ENCODE measurements at regions of chr3 and their contacts with region 1.

Region 1: DNA sequence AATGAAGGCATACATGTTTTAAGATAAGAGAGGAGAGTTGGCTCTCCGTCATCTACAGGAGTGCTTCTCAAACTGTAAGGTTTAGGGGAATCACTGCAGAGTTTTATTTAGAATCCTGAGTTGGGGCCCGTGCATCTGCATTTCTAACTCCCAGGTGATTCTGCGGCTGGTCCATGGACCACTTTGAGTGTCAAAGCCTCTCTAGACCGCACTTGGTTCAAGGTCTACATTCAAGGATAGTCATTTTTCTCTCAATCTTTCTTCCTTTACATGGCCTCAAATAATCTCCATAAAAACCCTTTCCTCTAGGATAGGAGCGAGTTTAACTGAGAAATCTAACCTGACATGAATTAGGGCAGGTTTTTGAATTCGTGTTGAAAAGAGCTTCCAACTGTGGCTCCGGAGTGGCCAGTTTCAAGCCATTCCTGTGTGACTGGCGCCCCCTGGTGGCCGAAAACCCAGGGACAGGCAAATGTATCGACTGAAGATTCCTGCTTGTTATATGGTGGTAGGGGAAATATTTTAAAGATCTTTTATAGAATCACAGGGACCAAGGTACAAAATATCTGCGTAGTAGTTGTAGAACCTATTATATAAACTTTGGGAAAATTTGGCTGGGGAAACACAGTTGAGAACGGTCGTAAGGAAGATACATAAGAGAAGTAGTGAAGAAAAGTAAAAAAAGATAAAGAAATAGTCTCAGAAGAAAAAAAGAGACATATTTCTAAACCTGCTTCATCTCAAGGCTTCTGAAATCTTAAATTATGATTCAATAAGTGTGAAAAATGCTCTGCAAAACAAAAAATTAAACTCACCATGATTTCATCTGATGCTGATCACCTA is 11.9 kb downstream of the GABRR3 start:
- DNase-seq: peak; percentile 58
- H3K27ac ChIP-seq: no peak overlapping the region
- CTCF ChIP-seq: peak; percentile 87

Region 2: DNA sequence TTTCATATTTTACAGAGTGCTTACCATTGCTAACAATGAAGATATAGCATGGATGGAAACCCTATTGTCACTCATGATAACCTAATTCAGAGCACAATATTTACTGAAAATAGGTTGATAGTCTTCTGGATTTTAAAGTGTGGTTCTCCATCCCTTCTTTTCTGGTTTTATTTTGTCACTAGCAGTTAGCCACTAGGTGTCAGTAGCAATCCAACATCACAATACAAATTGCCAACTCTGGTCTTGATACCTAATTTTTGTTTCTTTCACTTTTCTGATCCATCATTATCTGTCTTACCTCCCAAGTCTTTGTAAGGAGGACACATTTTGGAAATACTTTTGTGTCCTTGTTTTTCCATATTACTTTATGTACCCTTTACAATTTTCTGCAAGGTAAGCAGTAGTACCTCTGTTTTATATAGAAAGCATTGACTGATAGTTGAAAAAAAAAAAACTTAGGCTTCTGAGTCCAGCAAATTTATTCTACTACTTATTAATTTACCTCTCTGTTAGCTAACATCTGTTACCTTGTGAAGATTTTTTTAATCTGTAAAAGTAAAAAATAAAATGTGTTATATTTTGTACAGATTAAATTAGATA is 229.7 kb before region 1 on chr3:
- CTCF ChIA-PET with region 1: interaction called, 12 read pairs
- POLR2A ChIA-PET with region 1: no interaction called
- DNase-seq: peak; percentile 21
- H3K27ac ChIP-seq: no peak overlapping the region
- CTCF ChIP-seq: peak; percentile 78

Region 3: DNA sequence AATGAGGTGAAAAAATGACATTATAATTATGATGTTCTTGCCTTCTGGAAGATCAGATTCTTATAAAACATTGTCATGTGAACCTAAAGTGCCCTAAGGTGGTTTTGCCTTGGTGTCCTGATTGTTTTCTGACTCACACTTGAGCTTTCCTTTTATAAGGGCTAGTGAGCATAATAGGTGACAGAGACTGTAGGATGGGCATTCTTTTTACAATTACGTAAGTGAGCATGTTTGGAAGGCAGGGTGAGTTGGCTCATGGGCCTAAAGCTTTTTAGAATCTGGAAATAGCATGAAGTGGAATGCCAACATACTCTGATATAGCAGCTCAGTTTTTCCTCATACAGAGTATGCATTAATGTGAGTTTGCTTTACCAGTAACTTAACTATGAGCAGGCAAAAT is 160.2 kb before region 1 on chr3:
- CTCF ChIA-PET with region 1: no interaction called
- POLR2A ChIA-PET with region 1: no interaction called
- DNase-seq: peak; percentile 30
- H3K27ac ChIP-seq: no peak overlapping the region
- CTCF ChIP-seq: no peak